CD4-positive, alpha-beta T cell (primary cell): ENCODE measurements at regions of chr19 and their contacts with region 1.

Region 1: GRCh38 chr19:38784224-38784623 is 4.8 kb upstream of the LGALS7B start:
- DNase-seq: no peak
- ATAC-seq: no peak
- H3K4me3 ChIP-seq: no peak overlapping the region
- H3K4me3 Mint-ChIP-seq: no peak overlapping the region
- H3K27ac ChIP-seq: no peak overlapping the region
- H3K27ac Mint-ChIP-seq: no peak overlapping the region
- H3K4me1 ChIP-seq: no peaks in the 10 kb centered on the region
- H3K4me1 Mint-ChIP-seq: no peaks in the 10 kb centered on the region
- H3K27me3 ChIP-seq: no peaks in the 10 kb centered on the region
- H3K27me3 Mint-ChIP-seq: no peaks in the 10 kb centered on the region
- CTCF ChIP-seq: no peak

Region 2: GRCh38 chr19:38736413-38737280 is 47.6 kb before region 1 on chr19:
- CTCF ChIA-PET with region 1: no interaction called
- POLR2A ChIA-PET with region 1: no interaction called
- intact Hi-C with region 1: no loop called
- DNase-seq: peak; percentile 44 to 83 (median 59)
- ATAC-seq: peak; percentile 41
- H3K4me3 ChIP-seq: peak overlapping the region; percentile 41
- H3K4me3 Mint-ChIP-seq: peak overlapping the region; percentile 72
- H3K27ac ChIP-seq: no peak overlapping the region
- H3K27ac Mint-ChIP-seq: no peak overlapping the region
- H3K4me1 ChIP-seq: peaks cover 65% of the 10 kb centered on the region
- H3K4me1 Mint-ChIP-seq: peaks cover 44% of the 10 kb centered on the region
- H3K27me3 ChIP-seq: no peaks in the 10 kb centered on the region
- H3K27me3 Mint-ChIP-seq: peaks cover 5% of the 10 kb centered on the region
- CTCF ChIP-seq: no peak

Region 3: DNA sequence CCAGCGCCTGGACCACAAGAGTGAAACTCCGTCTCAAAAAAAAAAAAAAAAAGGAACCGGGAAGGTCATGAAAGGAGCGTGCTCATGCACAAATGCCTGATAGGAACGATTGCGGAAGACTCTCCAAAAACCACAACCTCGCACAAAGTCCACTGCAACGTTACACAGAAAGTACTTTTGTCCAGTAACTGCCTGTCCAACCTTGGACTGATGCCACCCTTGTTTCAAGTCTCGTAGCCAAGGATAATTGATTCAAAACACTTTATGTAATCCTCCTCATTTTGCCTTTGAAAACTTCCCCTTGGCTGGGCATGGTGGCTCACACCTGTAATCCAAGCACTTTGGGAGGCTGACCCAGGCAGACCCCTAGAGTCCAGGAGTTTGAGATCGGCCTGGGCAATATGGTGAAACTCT is 24.6 kb before region 1 on chr19:
- CTCF ChIA-PET with region 1: no interaction called
- POLR2A ChIA-PET with region 1: no interaction called
- intact Hi-C with region 1: loop called in 1 of 2 experiments (anchors 1 kb)
- DNase-seq: no peak
- ATAC-seq: no peak
- H3K4me3 ChIP-seq: no peak overlapping the region
- H3K4me3 Mint-ChIP-seq: no peak overlapping the region
- H3K27ac ChIP-seq: no peak overlapping the region
- H3K27ac Mint-ChIP-seq: no peak overlapping the region
- H3K4me1 ChIP-seq: peaks cover 7% of the 10 kb centered on the region
- H3K4me1 Mint-ChIP-seq: no peaks in the 10 kb centered on the region
- H3K27me3 ChIP-seq: no peaks in the 10 kb centered on the region
- H3K27me3 Mint-ChIP-seq: no peaks in the 10 kb centered on the region
- CTCF ChIP-seq: no peak